ENCODE measurements at regions of chr6 and their contacts with region 1.

Region 1: GRCh38 chr6:83824388-83824801 is 28.8 kb upstream of the RIPPLY2 start:
- DNase-seq: no peak
- H3K4me3 ChIP-seq: no peak overlapping the region
- H3K27ac ChIP-seq: no peak overlapping the region
- H3K4me1 ChIP-seq: no peaks in the 10 kb centered on the region
- H3K27me3 ChIP-seq: no peaks in the 10 kb centered on the region
- CTCF ChIP-seq: no peak
- POLR2A ChIP-seq: no peak

Region 2: GRCh38 chr6:83893024-83893423 is 68.6 kb after region 1 on chr6:
- intact Hi-C with region 1: no loop called
- DNase-seq: no peak
- H3K4me3 ChIP-seq: no peak overlapping the region
- H3K27ac ChIP-seq: no peak overlapping the region
- H3K4me1 ChIP-seq: no peaks in the 10 kb centered on the region
- H3K27me3 ChIP-seq: no peaks in the 10 kb centered on the region
- CTCF ChIP-seq: no peak
- POLR2A ChIP-seq: no peak

Region 3: GRCh38 chr6:85394853-85395538 is 1570.6 kb after region 1 on chr6:
- intact Hi-C with region 1: loop called (anchors 5 kb)
- DNase-seq: no peak
- H3K4me3 ChIP-seq: no peak overlapping the region
- H3K27ac ChIP-seq: peak overlapping the region in 1 of 2 donors; percentile 27
- H3K4me1 ChIP-seq: no peaks in the 10 kb centered on the region
- H3K27me3 ChIP-seq: no peaks in the 10 kb centered on the region
- CTCF ChIP-seq: no peak
- POLR2A ChIP-seq: no peak

Measured in breast epithelium (tissue), 4 donors.